ENCODE measurements at regions of chrX and their contacts with region 1.

Region 1: DNA sequence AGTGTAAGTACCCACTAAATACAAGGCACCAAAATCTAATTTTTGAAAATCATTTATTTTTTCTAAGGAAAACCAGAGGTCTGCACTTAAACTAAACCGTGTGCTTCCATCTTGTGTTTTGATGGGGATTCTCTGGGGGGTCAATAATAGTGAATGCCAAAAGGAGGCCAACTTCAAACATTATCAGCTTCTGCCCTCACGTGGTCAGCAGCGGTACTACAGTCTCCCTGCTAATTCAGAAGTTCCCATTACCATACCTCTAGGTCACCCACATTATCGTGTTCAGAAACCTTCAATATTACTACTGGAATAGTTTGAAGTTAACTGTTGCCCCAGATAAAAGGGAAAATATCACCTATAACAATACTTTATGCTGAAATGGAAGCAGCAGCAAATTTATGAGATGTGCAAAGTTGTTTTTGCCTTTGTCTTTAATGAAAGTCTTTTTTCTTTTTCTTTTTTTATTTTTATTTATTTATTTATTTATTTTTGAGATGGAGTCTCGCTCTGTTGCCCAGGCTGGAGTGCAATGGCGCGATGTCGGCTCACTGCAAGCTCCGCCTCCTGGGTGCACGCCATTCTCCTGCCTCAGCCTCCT is 17.3 kb downstream of the CTPS2 start:
- DNase-seq: peak; percentile 29
- ATAC-seq: peak; percentile 62; the same call in 2 of the 3 replicates
- H3K4me3 ChIP-seq: no peak overlapping the region
- H3K27ac ChIP-seq: no peak overlapping the region
- H3K4me1 ChIP-seq: peaks cover 15% of the 10 kb centered on the region
- H3K27me3 ChIP-seq: no peaks in the 10 kb centered on the region
- CTCF ChIP-seq: peak; percentile 67
- EP300 ChIP-seq: no peak
- POLR2A ChIP-seq: no peak
- RAD21 ChIP-seq: no peak

Region 2: GRCh38 chrX:16123222-16123786 is 571.9 kb before region 1 on chrX and contains the start of gene GRPR:
- CTCF ChIA-PET with region 1: no interaction called
- POLR2A ChIA-PET with region 1: no interaction called
- in situ Hi-C with region 1: no loop called
- intact Hi-C with region 1: loop called (anchors 10 kb)
- DNase-seq: peak; percentile 35
- ATAC-seq: peak; percentile 98
- H3K4me3 ChIP-seq: no peak within 1 kb of the TSS
- H3K27ac ChIP-seq: no peak within 1 kb of the TSS
- H3K4me1 ChIP-seq: no peaks in the 10 kb centered on the region
- H3K27me3 ChIP-seq: no peaks in the 10 kb centered on the region
- CTCF ChIP-seq: peak; percentile 67
- EP300 ChIP-seq: no peak
- POLR2A ChIP-seq: no peak
- RAD21 ChIP-seq: no peak
- total RNA-seq, gene GRPR: 0.04 TPM in 1 of 2 replicates, not detected in the other

Region 3: GRCh38 chrX:16619024-16619423 is 76.2 kb before region 1 on chrX:
- CTCF ChIA-PET with region 1: no interaction called
- POLR2A ChIA-PET with region 1: no interaction called
- in situ Hi-C with region 1: no loop called
- intact Hi-C with region 1: no loop called
- DNase-seq: no peak
- ATAC-seq: no peak
- H3K4me3 ChIP-seq: no peak overlapping the region
- H3K27ac ChIP-seq: no peak overlapping the region
- H3K4me1 ChIP-seq: no peaks in the 10 kb centered on the region
- H3K27me3 ChIP-seq: no peaks in the 10 kb centered on the region
- CTCF ChIP-seq: no peak
- EP300 ChIP-seq: no peak
- POLR2A ChIP-seq: no peak
- RAD21 ChIP-seq: no peak

Measured in HepG2 (cell line).